ENCODE measurements at regions of chr1 and their contacts with region 1.

Region 1: GRCh38 chr1:205396967-205397616 is 24.8 kb downstream of the LEMD1 start:
- DNase-seq: peak; percentile 87
- H3K27ac ChIP-seq: no peak overlapping the region
- CTCF ChIP-seq: peak; percentile 74

Region 2: DNA sequence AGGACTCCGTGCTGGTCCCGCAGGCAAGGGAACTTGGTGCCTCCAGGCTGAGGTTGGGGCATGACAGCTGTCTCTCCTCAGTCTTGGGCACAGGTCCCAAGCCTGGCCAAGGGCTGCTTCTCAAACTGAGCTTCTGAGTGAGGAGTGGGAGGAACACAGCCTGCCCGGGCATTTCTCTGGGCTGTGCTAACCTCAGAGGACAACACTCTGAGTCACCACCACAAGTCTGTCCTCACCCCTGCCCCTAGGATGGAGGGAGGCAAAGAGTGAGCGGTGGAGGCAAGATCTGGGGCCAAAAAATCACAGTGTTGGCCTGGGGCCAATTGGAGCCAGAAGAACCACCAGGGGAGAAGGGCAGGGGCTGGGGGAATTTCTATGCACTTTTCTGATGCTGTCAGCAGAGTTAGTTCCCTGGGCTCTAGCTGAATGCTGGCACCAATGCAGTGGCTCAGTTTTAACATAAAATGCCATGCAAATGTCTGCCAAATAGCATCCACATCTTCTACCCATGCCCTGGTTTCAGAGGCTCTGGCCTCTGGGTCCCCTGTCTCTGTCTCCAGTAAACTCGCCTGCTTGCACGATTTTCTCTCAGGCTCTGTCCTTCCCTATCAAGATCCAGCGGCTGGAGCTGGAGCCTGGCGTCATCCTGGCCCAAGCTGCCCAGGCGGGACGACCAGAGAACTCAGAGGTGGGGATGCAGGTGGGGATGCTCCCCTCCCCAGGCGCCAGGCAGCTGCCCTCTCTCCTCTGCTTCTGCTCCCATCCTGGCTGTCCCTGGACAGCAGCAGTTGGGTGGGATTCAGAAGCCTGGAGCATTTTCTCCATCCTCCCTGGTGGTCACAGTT is 96.4 kb after region 1 on chr1:
- CTCF ChIA-PET with region 1: interaction called, 94 read pairs
- POLR2A ChIA-PET with region 1: no interaction called
- DNase-seq: peak; percentile 94
- H3K27ac ChIP-seq: peak overlapping the region; percentile 92
- CTCF ChIP-seq: no peak

Measured in RWPE1 (cell line).